Ascending aorta (tissue), 2 donors: ENCODE measurements at regions of chr2 and their contacts with region 1.

Region 1: GRCh38 chr2:30711646-30712085 is 95.6 kb downstream of the CAPN13 start:
- DNase-seq: peak; percentile 32 to 92
- H3K4me3 ChIP-seq: no peak overlapping the region
- H3K27ac ChIP-seq: no peak overlapping the region
- H3K4me1 ChIP-seq: peaks cover 0 to 3% of the 10 kb centered on the region in 2 donors
- H3K27me3 ChIP-seq: no peaks in the 10 kb centered on the region
- CTCF ChIP-seq: peak; percentile 97 to 99 (median 99)

Region 2: GRCh38 chr2:30208452-30208851 is 503.2 kb before region 1 on chr2:
- intact Hi-C with region 1: loop called (anchors 1 kb)
- DNase-seq: peak in 1 of 2 donors; percentile 78
- H3K4me3 ChIP-seq: no peak overlapping the region
- H3K27ac ChIP-seq: no peak overlapping the region
- H3K4me1 ChIP-seq: no peaks in the 10 kb centered on the region
- H3K27me3 ChIP-seq: no peaks in the 10 kb centered on the region
- CTCF ChIP-seq: peak; percentile 87 to 91 (median 89)

Region 3: DNA sequence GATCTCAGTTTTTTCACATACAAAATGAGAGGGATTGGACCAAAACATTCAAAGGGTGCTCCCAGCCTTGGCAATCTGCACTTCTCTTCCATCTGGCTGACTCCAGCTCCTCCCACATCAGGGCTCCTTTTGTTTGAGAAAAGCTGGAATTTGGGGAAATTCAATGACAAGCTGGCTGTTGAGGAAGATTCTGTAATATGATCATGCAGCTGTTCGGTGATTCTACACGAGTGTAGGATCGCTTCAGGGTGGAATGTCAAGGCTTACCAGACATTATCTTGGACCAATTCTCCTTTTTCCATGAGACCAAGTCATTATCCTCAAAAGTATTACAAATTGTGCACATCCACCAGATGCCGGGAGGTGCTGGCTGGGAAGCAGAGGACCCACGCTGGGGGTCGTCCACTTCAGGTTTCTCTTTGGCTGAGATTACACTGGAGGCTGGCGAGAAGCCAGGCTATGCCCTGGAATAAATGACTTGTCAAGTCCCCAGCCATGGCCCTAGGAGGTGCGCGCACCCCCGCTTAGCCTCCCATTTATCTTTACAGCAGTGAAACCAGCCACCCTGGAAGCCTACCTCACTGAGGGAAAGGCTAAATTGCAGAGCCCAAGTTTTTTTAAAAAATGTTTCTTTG is 307.2 kb before region 1 on chr2:
- intact Hi-C with region 1: loop called (anchors 5 kb)
- DNase-seq: no peak
- H3K4me3 ChIP-seq: no peak overlapping the region
- H3K27ac ChIP-seq: no peak overlapping the region
- H3K4me1 ChIP-seq: peaks cover 14 to 37% of the 10 kb centered on the region in 2 donors
- H3K27me3 ChIP-seq: no peaks in the 10 kb centered on the region
- CTCF ChIP-seq: no peak

Region 4: GRCh38 chr2:30503007-30503694 is 208.5 kb before region 1 on chr2:
- intact Hi-C with region 1: loop called (anchors 5 kb)
- DNase-seq: no peak
- H3K4me3 ChIP-seq: no peak overlapping the region
- H3K27ac ChIP-seq: no peak overlapping the region
- H3K4me1 ChIP-seq: peaks cover 0 to 4% of the 10 kb centered on the region in 2 donors
- H3K27me3 ChIP-seq: no peaks in the 10 kb centered on the region
- CTCF ChIP-seq: peak in 2 of 3 experiments; percentile 8 to 14

Region 5: GRCh38 chr2:30932870-30933269 is 221.2 kb after region 1 on chr2:
- intact Hi-C with region 1: no loop called
- DNase-seq: no peak
- H3K4me3 ChIP-seq: no peak overlapping the region
- H3K27ac ChIP-seq: no peak overlapping the region
- H3K4me1 ChIP-seq: no peaks in the 10 kb centered on the region
- H3K27me3 ChIP-seq: no peaks in the 10 kb centered on the region
- CTCF ChIP-seq: no peak

Region 6: GRCh38 chr2:31170071-31170698 is 458.5 kb after region 1 on chr2:
- intact Hi-C with region 1: loop called (anchors 1 kb)
- DNase-seq: peak in 1 of 2 donors; percentile 70
- H3K4me3 ChIP-seq: no peak overlapping the region
- H3K27ac ChIP-seq: no peak overlapping the region
- H3K4me1 ChIP-seq: no peaks in the 10 kb centered on the region
- H3K27me3 ChIP-seq: no peaks in the 10 kb centered on the region
- CTCF ChIP-seq: peak; percentile 77 to 92 (median 91)

Region 7: GRCh38 chr2:31523871-31524492 is 812.3 kb after region 1 on chr2:
- intact Hi-C with region 1: loop called (anchors 5 kb)
- DNase-seq: no peak
- H3K4me3 ChIP-seq: no peak overlapping the region
- H3K27ac ChIP-seq: no peak overlapping the region
- H3K4me1 ChIP-seq: no peaks in the 10 kb centered on the region
- H3K27me3 ChIP-seq: no peaks in the 10 kb centered on the region
- CTCF ChIP-seq: peak in 2 of 3 experiments; percentile 44 to 64